ENCODE measurements at regions of chr2 and their contacts with region 1.

Region 1: GRCh38 chr2:171598713-171599319 is 76.5 kb downstream of the CYBRD1 start:
- DNase-seq: peak in 5 of 10 donors; percentile 13 to 60 (median 34)

Region 2: GRCh38 chr2:170873035-170873692 is 725.7 kb before region 1 on chr2:
- intact Hi-C with region 1: no loop called
- DNase-seq: peak in 9 of 10 donors; percentile 39 to 92 (median 69)

Region 3: DNA sequence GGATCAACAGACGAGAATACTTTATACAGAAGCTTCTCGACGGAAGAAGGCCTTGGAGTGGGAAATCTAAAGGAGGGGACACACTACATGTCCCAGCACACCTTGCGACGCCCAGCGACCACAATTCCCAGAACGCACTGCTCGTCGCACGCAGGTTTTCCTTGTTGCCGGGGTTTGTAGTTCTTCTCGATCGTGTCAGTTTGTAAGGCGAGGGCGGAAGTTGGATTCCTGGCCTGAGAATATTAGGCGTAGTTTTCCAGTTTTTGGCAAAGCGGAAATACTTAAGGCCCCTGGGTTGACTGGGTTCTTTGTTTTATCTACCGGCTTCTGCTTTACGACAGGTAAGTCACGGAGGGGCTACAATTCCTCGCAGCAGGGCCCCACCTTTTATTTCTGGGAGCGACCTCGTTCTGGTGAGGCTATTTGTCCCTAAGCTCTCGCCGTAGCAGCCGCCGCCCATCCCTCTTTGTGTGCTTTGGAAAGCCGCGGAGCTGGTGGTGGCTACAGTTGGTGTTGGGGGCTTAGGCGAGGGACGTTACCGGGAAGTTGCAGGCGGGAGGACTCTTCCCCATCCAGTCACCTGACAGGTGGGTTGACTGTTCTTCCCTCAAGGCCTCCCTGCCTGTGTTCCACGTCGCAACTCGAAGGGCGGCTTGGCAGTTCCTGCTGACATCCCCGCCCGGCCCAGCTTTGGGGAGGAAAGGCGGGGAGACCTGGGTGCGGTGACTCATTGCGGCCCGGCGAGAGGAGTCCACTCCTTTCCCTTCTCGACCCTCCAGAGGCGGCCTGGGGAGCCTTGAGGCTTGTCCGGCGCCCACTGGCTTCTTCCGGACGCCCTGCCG is 88.7 kb after region 1 on chr2 and contains the start of gene DYNC1I2:
- intact Hi-C with region 1: loop called (anchors 10 kb)
- DNase-seq: peak; percentile 88 to 99 (median 94)